T-cell (primary cell): ENCODE measurements at regions of chr12 and their contacts with region 1.

Region 1: DNA sequence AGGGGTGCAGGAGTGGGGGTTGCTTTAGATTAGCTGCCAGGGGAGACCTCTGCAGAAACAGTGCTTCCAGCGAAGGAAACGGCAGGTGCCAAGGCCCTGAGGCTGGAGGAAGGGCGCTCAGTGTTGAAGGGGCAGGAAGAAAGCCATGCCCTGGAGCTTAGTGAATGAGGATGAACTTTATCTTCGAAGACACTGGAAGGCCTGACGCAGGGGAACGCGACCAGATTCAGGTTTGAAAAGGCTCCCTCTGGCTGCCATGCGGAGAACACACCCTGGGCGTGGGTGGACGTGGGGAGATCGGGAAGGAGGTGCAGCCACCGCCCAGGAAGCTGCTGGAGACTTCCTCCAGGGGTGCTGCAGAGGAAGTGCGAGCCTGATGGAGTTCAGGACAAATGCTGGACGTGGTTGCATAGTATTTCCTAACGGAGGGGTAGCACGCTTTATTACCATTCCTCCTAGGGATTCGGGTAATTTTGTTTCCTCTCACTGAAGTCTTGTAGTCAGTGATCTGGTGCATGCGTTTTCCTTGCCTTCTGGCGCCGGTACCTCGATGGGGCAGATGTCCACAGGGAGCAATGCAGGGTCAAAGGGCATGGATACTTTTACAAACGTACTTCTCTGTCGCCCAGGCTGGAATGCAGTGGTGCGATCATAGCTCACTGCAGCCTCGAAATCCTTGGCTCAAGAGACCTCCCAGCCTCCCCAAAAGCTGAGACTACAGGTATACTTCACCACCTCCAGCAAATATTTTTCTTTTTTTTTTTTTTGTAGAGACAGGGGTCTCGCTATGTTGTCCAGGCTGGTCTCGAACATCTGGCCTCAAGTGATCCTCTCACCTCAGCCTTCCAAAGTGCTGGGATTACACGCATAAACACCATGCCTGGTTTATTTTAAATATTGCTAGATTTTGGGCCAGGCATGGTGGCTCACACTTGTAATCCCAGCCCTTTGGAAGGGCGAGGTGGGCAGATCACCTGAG is 26.4 kb upstream of the UBC start:
- DNase-seq: peak; percentile 60 to 90 (median 74)
- ATAC-seq: peak; percentile 52 to 70 (median 66)
- H3K4me3 ChIP-seq: peak overlapping the region; percentile 70 to 75
- H3K4me3 Mint-ChIP-seq: no peak overlapping the region
- H3K27ac ChIP-seq: peak overlapping the region; percentile 82
- H3K27ac Mint-ChIP-seq: no peak overlapping the region
- H3K4me1 ChIP-seq: peaks cover 24% of the 10 kb centered on the region in 2 experiments
- H3K4me1 Mint-ChIP-seq: peaks cover 6 to 18% (median 10%) of the 10 kb centered on the region in 3 donors
- H3K27me3 ChIP-seq: no peaks in the 10 kb centered on the region
- H3K27me3 Mint-ChIP-seq: no peaks in the 10 kb centered on the region

Region 2: DNA sequence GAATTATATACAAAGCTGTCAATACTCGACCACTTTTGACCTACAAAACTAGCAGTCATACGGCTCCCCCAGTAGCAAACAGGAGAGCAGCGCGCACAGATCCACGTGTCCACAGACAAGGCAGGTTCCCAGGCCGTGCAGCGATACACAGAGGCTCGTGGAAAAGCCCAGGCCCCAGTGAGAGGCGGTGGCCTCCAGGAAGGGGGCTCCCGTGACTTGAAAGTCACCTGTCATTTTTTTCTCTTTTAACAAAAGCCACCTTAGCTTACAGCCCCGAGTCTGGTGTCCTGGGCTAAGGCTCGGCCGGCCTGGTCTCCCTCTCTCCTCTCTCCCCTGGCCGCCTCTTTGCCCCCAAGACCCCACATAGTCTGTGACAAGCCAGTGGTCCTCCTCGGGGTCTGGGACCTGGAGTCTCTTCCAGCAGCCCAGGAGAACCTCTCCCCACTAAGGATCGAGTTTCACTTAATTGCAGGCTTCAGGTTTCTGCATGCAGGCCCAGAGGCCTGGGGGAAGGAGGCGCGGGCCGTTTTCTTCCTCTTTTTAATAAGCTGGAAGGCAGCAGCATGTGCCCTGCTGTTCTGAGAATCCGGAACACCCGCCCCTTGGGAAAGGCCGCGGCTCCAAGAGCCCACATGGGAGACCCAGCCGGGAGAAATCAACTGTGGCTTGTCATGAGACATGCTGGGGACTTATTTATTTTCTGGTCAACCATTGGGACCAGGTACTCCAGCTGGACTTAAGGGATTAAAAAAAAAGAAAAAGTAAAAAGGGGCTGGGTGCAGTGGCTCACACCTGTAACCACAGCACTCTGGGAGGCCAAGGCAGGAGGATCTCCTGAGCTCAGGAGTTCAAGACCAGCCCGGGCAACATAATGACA is 389.3 kb before region 1 on chr12:
- CTCF ChIA-PET with region 1: no interaction called
- POLR2A ChIA-PET with region 1: no interaction called
- DNase-seq: peak in 1 of 35 experiments; percentile 26
- ATAC-seq: no peak
- H3K4me3 ChIP-seq: no peak overlapping the region
- H3K4me3 Mint-ChIP-seq: peak overlapping the region in 1 of 3 donors; percentile 41
- H3K27ac ChIP-seq: no peak overlapping the region
- H3K27ac Mint-ChIP-seq: no peak overlapping the region
- H3K4me1 ChIP-seq: peaks cover 11 to 66% of the 10 kb centered on the region in 2 experiments
- H3K4me1 Mint-ChIP-seq: peaks cover 78 to 90% (median 80%) of the 10 kb centered on the region in 3 donors
- H3K27me3 ChIP-seq: no peaks in the 10 kb centered on the region
- H3K27me3 Mint-ChIP-seq: no peaks in the 10 kb centered on the region

Region 3: DNA sequence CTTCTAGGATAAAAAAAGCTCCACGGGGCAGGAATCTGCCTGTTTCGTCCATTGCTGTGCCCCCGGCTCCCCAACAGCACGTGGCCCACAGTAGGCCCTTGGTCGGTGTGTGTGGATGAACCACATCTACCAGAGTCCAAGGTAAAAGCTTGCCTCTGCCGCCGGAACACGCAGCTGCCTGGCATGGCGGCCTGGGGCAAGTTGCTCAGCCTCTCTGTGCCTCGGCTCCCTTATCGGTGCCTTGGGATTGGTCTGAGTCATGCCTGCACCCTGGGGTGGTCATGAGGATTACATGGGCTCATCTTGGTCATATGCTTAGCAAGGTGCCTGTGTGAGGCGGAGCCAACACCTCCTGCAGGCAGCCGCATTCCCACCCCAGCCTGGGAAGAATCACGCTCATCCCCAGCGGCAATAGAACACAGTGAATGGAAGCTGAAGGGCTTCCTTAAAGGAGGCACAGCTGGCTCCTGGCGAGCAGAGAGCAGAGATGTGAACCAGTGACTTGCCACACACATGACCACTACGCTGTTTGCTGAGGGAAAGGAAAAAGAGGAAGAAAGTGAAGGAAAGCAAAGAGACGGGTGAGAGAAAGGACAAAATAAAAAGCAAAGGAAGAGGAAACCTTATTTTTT is 71.7 kb before region 1 on chr12:
- CTCF ChIA-PET with region 1: no interaction called
- POLR2A ChIA-PET with region 1: no interaction called
- DNase-seq: no peak
- ATAC-seq: peak in 1 of 4 experiments; percentile 24
- H3K4me3 ChIP-seq: peak overlapping the region in 1 of 2 donors; percentile 35
- H3K4me3 Mint-ChIP-seq: peak overlapping the region in 1 of 3 donors; percentile 65
- H3K27ac ChIP-seq: no peak overlapping the region
- H3K27ac Mint-ChIP-seq: no peak overlapping the region
- H3K4me1 ChIP-seq: peaks cover 0 to 14% of the 10 kb centered on the region in 2 experiments
- H3K4me1 Mint-ChIP-seq: peaks cover 4 to 19% (median 13%) of the 10 kb centered on the region in 3 donors
- H3K27me3 ChIP-seq: peaks cover 0 to 23% of the 10 kb centered on the region in 2 experiments
- H3K27me3 Mint-ChIP-seq: peaks cover 8 to 14% of the 10 kb centered on the region in 2 donors

Region 4: GRCh38 chr12:124906606-124907261 is 34.1 kb before region 1 on chr12:
- CTCF ChIA-PET with region 1: interaction called, 32 to 142 read pairs
- POLR2A ChIA-PET with region 1: interaction called, 8 to 10 read pairs
- DNase-seq: peak; percentile 64 to 96 (median 86)
- ATAC-seq: peak; percentile 73 to 95 (median 90)
- H3K4me3 ChIP-seq: no peak overlapping the region
- H3K4me3 Mint-ChIP-seq: no peak overlapping the region
- H3K27ac ChIP-seq: peak overlapping the region; percentile 42
- H3K27ac Mint-ChIP-seq: peak overlapping the region; percentile 70 to 71
- H3K4me1 ChIP-seq: peaks cover 12 to 16% of the 10 kb centered on the region in 2 experiments
- H3K4me1 Mint-ChIP-seq: peaks cover 27 to 30% (median 29%) of the 10 kb centered on the region in 3 donors
- H3K27me3 ChIP-seq: no peaks in the 10 kb centered on the region
- H3K27me3 Mint-ChIP-seq: no peaks in the 10 kb centered on the region

Region 5: GRCh38 chr12:124917135-124917840 is 23.6 kb before region 1 on chr12:
- CTCF ChIA-PET with region 1: interaction called, 7 to 64 read pairs
- POLR2A ChIA-PET with region 1: interaction called, 10 to 15 read pairs
- DNase-seq: peak; percentile 74 to 97 (median 92)
- ATAC-seq: peak; percentile 75 to 84 (median 80)
- H3K4me3 ChIP-seq: peak overlapping the region; percentile 44 to 84
- H3K4me3 Mint-ChIP-seq: peak overlapping the region; percentile 99 to 100 (median 100)
- H3K27ac ChIP-seq: peak overlapping the region; percentile 91
- H3K27ac Mint-ChIP-seq: peak overlapping the region; percentile 98 to 99
- H3K4me1 ChIP-seq: peaks cover 57 to 80% of the 10 kb centered on the region in 2 experiments
- H3K4me1 Mint-ChIP-seq: peaks cover 87 to 96% (median 89%) of the 10 kb centered on the region in 3 donors
- H3K27me3 ChIP-seq: no peaks in the 10 kb centered on the region
- H3K27me3 Mint-ChIP-seq: peaks cover 0 to 8% of the 10 kb centered on the region in 2 donors

Region 6: DNA sequence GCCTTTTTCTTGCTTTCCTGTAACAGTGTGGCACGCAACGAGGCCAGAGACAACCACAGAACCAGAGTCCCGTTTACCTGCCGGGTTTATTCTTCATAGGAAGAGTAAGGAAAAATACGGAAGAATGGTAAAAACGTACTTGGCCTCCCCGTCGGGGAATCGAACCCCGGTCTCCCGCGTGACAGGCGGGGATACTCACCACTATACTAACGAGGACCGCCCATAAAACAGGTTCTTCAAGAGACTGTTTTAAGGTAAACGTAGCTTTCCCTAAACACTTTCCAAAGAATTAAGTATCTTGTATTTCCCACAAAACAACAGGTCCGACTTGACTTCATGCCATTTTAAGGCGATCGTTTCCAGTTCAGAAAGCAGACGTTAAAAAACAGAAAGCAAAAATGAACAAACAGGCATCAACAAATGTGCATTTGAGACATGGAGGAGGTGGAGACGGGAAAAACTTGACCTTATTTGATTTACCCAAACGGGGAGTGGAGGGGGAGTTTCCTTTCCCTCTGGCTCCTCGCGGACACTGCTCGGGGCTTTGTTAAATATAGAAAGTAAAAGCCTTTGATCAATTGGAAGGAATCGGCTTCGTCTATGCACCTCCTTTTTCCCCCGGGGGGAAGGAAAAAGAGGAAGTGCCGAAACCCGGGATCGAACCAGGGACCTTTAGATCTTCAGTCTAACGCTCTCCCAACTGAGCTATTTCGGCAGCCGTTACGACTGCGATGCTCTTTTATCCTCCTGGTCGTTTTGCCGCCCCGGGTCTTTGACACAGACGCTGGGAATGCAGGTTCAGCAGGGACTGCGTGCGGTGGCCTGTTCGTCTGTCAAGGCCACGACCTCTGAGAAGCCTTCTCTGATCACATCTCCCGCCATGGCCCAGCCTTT is 13.4 kb before region 1 on chr12:
- CTCF ChIA-PET with region 1: interaction called, 3 to 54 read pairs
- POLR2A ChIA-PET with region 1: interaction called in 1 of 2 experiments, 8 read pairs
- DNase-seq: peak; percentile 76 to 93 (median 90)
- ATAC-seq: peak; percentile 83 to 89 (median 84)
- H3K4me3 ChIP-seq: peak overlapping the region; percentile 58 to 79
- H3K4me3 Mint-ChIP-seq: peak overlapping the region; percentile 84 to 89 (median 86)
- H3K27ac ChIP-seq: peak overlapping the region; percentile 72
- H3K27ac Mint-ChIP-seq: peak overlapping the region; percentile 97 to 99
- H3K4me1 ChIP-seq: peaks cover 11 to 34% of the 10 kb centered on the region in 2 experiments
- H3K4me1 Mint-ChIP-seq: peaks cover 29 to 34% (median 31%) of the 10 kb centered on the region in 3 donors
- H3K27me3 ChIP-seq: no peaks in the 10 kb centered on the region
- H3K27me3 Mint-ChIP-seq: peaks cover 3 to 8% of the 10 kb centered on the region in 2 donors

Region 7: GRCh38 chr12:124992874-124993625 is 52.2 kb after region 1 on chr12:
- CTCF ChIA-PET with region 1: interaction called, 3 to 10 read pairs
- POLR2A ChIA-PET with region 1: no interaction called
- DNase-seq: peak; percentile 56 to 92 (median 78)
- ATAC-seq: peak; percentile 46 to 80 (median 53)
- H3K4me3 ChIP-seq: peak overlapping the region; percentile 57 to 67
- H3K4me3 Mint-ChIP-seq: peak overlapping the region; percentile 85 to 93 (median 87)
- H3K27ac ChIP-seq: peak overlapping the region; percentile 47
- H3K27ac Mint-ChIP-seq: peak overlapping the region; percentile 66 to 84
- H3K4me1 ChIP-seq: peaks cover 20 to 38% of the 10 kb centered on the region in 2 experiments
- H3K4me1 Mint-ChIP-seq: peaks cover 27 to 44% (median 35%) of the 10 kb centered on the region in 3 donors
- H3K27me3 ChIP-seq: no peaks in the 10 kb centered on the region
- H3K27me3 Mint-ChIP-seq: no peaks in the 10 kb centered on the region